SK-MEL-5 (cell line): ENCODE measurements at regions of chr12 and their contacts with region 1.

Region 1: GRCh38 chr12:49930515-49931288 is 19.8 kb upstream of the AQP2 start:
- DNase-seq: no peak

Region 2: GRCh38 chr12:50066433-50066832 is 135.7 kb after region 1 on chr12:
- in situ Hi-C with region 1: loop called (anchors 10 kb)
- DNase-seq: no peak